Right cardiac atrium (tissue), 5 donors: ENCODE measurements at regions of chr3 and their contacts with region 1.

Region 1: DNA sequence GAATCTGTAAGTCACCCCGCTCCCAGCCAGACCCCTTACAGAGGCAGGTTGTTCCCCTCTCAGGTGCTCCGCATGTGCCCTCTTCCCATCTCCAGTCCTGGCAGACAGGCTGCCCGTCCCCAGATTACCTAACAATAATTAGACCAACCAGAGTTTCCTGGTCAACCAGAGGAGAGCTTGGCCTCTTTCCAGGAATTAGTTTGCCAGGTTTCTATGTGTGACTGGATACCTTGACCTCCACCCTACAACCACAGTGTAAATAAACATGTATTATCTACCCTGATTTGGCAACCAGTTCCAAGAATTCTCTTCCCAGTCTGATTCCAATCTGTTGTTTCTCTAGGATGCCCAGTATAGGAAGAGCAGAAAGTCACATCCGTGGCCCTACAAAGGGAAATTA is 178.0 kb upstream of the UMPS start:
- DNase-seq: no peak
- ATAC-seq: no peak
- H3K4me3 ChIP-seq: no peak overlapping the region
- H3K27ac ChIP-seq: no peak overlapping the region
- H3K4me1 ChIP-seq: peaks cover under 1% of the 10 kb centered on the region
- H3K27me3 ChIP-seq: no peaks in the 10 kb centered on the region

Region 2: GRCh38 chr3:124492811-124493210 is 59.4 kb before region 1 on chr3:
- intact Hi-C with region 1: loop called in 2 of 4 experiments (anchors 5 kb)
- DNase-seq: peak in 2 of 3 donors; percentile 20 to 52
- ATAC-seq: peak in 1 of 2 donors; percentile 30
- H3K4me3 ChIP-seq: no peak overlapping the region
- H3K27ac ChIP-seq: no peak overlapping the region
- H3K4me1 ChIP-seq: no peaks in the 10 kb centered on the region
- H3K27me3 ChIP-seq: no peaks in the 10 kb centered on the region